CD8-positive, alpha-beta memory T cell (primary cell): ENCODE measurements at regions of chr2 and their contacts with region 1.

Region 1: DNA sequence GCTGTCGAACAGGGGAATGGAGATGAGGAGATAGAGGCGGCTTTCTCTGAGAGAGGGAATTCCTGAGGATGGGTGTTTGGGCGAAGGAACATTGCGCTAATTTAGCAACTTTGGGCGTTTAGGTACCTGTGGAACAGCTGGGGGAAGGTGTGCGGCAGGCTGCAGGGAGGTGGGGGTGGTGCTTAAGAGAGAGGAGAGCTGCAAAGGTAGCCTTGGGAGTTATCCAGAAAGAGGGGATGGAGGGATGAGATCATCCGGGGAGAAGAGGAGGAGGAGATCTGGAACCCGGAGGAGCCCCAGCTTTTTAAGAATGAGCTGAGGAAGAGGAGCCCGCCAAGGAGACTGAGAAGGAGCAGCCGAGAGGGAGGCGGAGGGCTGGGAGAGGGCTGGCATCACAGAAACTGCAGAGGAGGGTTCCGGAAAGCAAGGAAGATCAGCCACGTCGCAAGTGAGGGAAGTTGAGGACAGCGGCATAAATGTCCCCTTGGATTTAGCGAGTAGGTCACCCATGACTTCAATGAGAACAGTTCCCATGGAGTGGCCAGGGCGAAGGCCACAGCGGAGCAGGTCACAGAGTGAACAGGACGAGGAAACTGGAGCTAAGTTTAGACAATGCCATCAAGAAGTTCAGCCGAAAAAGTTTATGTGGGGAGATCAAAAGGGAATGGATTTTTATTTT is 174.7 kb downstream of the KLHL29 start:
- DNase-seq: no peak
- H3K4me3 ChIP-seq: no peak overlapping the region
- H3K4me3 Mint-ChIP-seq: peak overlapping the region in 1 of 7 donors; percentile 45
- H3K27ac ChIP-seq: no peak overlapping the region
- H3K27ac Mint-ChIP-seq: peak overlapping the region in 1 of 8 donors; percentile 80
- H3K4me1 ChIP-seq: no peaks in the 10 kb centered on the region
- H3K4me1 Mint-ChIP-seq: no peaks in the 10 kb centered on the region
- H3K27me3 ChIP-seq: no peaks in the 10 kb centered on the region
- H3K27me3 Mint-ChIP-seq: peaks cover 0 to 1% of the 10 kb centered on the region in 2 donors

Region 2: GRCh38 chr2:25197336-25198208 is 1637.9 kb after region 1 on chr2:
- CTCF ChIA-PET with region 1: no interaction called
- POLR2A ChIA-PET with region 1: interaction called, 10 read pairs
- DNase-seq: no peak
- H3K4me3 ChIP-seq: no peak overlapping the region
- H3K4me3 Mint-ChIP-seq: no peak overlapping the region
- H3K27ac ChIP-seq: no peak overlapping the region
- H3K27ac Mint-ChIP-seq: peak overlapping the region in 1 of 8 donors; percentile 63
- H3K4me1 ChIP-seq: peaks cover 6% of the 10 kb centered on the region
- H3K4me1 Mint-ChIP-seq: peaks cover 10 to 15% (median 11%) of the 10 kb centered on the region in 3 donors
- H3K27me3 ChIP-seq: no peaks in the 10 kb centered on the region
- H3K27me3 Mint-ChIP-seq: no peaks in the 10 kb centered on the region